Mammary epithelial cell (primary cell): ENCODE measurements at regions of chr6 and their contacts with region 1.

Region 1: GRCh38 chr6:25173951-25174474 is 105.2 kb upstream of the CARMIL1 start:
- DNase-seq: peak; percentile 92
- H3K4me3 ChIP-seq: no peak overlapping the region
- H3K27ac ChIP-seq: peak overlapping the region; percentile 92
- H3K4me1 ChIP-seq: peaks cover 50% of the 10 kb centered on the region
- H3K27me3 ChIP-seq: no peaks in the 10 kb centered on the region
- CTCF ChIP-seq: no peak

Region 2: GRCh38 chr6:25193460-25194171 is 19.6 kb after region 1 on chr6:
- CTCF ChIA-PET with region 1: no interaction called
- dilution Hi-C with region 1: no loop called
- in situ Hi-C with region 1: no loop called
- intact Hi-C with region 1: loop called (anchors 2 kb)
- DNase-seq: peak; percentile 87
- H3K4me3 ChIP-seq: peak overlapping the region in 2 of 3 experiments; percentile 15 to 24
- H3K27ac ChIP-seq: peak overlapping the region; percentile 57
- H3K4me1 ChIP-seq: peaks cover 26% of the 10 kb centered on the region
- H3K27me3 ChIP-seq: no peaks in the 10 kb centered on the region
- CTCF ChIP-seq: no peak